Aorta (tissue), 5 donors: ENCODE measurements at regions of chr22 and their contacts with region 1.

Region 1: GRCh38 chr22:36398621-36399469 is 11.1 kb upstream of the MYH9 start:
- DNase-seq: no peak
- ATAC-seq: no peak
- H3K4me3 ChIP-seq: no peak overlapping the region
- H3K27ac ChIP-seq: no peak overlapping the region
- H3K4me1 ChIP-seq: no peaks in the 10 kb centered on the region
- H3K27me3 ChIP-seq: no peaks in the 10 kb centered on the region

Region 2: GRCh38 chr22:36433318-36434231 is 34.7 kb after region 1 on chr22:
- intact Hi-C with region 1: loop called in 1 of 2 experiments (anchors 5 kb)
- DNase-seq: no peak
- ATAC-seq: peak; percentile 15
- H3K4me3 ChIP-seq: no peak overlapping the region
- H3K27ac ChIP-seq: no peak overlapping the region
- H3K4me1 ChIP-seq: no peaks in the 10 kb centered on the region
- H3K27me3 ChIP-seq: no peaks in the 10 kb centered on the region